ENCODE measurements at regions of chrX and their contacts with region 1.

Region 1: DNA sequence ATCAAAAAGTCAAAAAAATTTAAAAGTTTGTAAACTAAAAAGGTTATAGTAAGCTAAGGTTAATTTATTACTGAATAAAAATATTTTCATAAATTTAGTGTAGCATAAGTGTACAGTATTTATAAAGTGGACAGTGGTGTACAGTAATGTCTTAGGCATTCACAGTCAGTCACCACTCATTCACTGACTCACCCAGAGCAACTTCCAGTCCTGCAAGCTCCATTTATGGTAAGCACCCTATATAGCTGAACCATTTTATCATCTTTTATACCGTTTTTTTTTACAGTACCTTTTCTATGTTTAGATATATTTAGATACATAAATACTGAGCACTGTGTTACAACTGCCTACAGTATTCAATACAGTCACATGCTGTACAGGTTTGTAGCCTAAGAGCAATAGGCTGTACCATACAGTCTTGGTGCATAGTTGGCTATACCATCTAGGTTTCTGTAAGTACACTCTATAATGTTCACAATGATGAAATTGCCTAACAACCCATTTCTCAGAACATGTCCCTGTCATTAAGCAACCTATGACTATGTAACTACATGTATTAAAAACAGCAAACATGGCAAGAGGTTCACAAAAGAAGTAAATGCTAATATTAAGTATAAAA is 18.6 kb downstream of the ACSL4 start:
- DNase-seq: no peak
- CTCF ChIP-seq: no peak

Region 2: DNA sequence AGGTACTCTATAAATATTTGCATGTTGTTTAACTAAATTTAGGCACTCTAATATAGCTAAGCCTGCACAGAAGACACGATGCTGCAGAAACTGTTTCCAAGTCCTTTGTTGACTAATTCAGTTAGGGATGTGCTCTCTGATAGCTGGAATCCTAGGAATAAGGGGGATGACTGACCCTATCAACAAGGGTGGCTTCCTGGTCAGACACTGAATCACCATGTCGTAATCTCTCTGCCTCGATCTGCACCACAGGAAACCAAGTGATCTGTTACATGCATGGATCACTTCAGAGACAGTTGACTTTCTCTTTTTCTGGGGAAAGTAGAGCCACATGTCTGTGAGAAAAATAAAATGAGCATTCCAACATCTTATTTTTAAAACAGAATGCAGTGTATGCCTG is 401.7 kb before region 1 on chrX:
- CTCF ChIA-PET with region 1: no interaction called
- POLR2A ChIA-PET with region 1: no interaction called
- DNase-seq: no peak
- CTCF ChIP-seq: no peak

Region 3: GRCh38 chrX:109485470-109486340 is 228.7 kb before region 1 on chrX:
- CTCF ChIA-PET with region 1: interaction called, 12 read pairs
- POLR2A ChIA-PET with region 1: no interaction called
- DNase-seq: peak; percentile 25
- CTCF ChIP-seq: peak; percentile 69

Region 4: DNA sequence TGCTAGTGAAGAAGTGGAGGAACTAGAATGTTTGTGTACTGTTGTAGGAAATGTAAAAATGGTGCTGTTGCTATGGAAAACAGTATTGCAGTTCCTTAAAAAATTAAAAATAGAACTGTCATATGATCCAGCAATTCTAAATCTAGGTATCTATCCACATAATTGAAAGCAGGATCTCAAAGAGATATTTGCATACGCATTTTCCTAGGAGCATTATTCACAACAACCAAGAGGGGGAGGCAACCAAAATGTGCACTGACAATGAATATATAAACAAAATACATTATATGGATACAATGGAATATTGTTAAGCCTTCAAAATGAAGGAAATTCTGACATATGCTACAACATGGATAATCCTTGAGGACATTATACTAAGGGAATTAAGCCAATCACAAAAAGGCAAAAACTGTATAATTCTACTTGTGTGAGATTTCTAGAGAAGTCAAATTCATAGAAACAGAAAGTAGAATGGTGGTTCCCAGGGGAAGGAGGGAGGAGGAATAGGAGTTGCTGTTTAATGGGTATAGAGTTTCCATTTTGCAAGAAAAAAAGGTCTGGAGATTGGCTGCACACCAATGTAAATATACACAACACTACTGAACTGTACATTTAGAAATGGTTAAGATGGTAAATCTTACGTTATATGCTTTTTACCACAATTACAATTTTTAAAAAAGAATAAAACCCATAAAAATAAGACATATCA is 53.9 kb before region 1 on chrX:
- CTCF ChIA-PET with region 1: no interaction called
- POLR2A ChIA-PET with region 1: no interaction called
- DNase-seq: no peak
- CTCF ChIP-seq: no peak

Region 5: GRCh38 chrX:109732780-109733657 is 18.6 kb after region 1 on chrX and contains the start of gene ACSL4:
- CTCF ChIA-PET with region 1: interaction called, 23 read pairs
- POLR2A ChIA-PET with region 1: no interaction called
- DNase-seq: peak; percentile 83
- CTCF ChIP-seq: no peak

Region 6: DNA sequence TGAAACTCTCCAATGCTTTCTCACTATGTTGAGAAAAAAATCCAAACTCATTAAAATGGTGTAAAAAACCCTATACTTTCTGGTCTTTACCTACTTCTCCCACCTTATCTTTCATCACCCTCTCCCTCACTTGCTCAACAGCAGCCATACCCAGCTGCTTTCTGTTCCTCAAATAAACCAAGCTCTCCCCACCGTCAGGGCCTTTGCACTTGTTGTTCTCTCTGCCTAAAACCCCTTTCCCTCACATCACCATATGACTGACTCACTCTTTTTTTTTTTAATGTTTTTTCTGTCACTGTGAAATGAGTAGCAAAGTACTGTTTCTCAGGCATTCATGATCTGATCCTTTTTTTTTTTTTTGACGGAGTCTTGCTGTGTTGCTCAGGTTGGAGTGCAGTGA is 166.2 kb after region 1 on chrX:
- CTCF ChIA-PET with region 1: interaction called, 34 read pairs
- POLR2A ChIA-PET with region 1: no interaction called
- DNase-seq: peak; percentile 49
- CTCF ChIP-seq: no peak